CD8-positive, alpha-beta T cell (primary cell): ENCODE measurements at regions of chr6 and their contacts with region 1.

Region 1: GRCh38 chr6:6676910-6677441 is 88.5 kb downstream of the LY86 start:
- DNase-seq: peak; percentile 58 to 90 (median 75)
- ATAC-seq: peak; percentile 98
- H3K4me3 ChIP-seq: no peak overlapping the region
- H3K4me3 Mint-ChIP-seq: no peak overlapping the region
- H3K27ac ChIP-seq: no peak overlapping the region
- H3K27ac Mint-ChIP-seq: no peak overlapping the region
- H3K4me1 ChIP-seq: peaks cover 7% of the 10 kb centered on the region
- H3K4me1 Mint-ChIP-seq: peaks cover 9% of the 10 kb centered on the region
- H3K27me3 ChIP-seq: no peaks in the 10 kb centered on the region
- H3K27me3 Mint-ChIP-seq: peaks cover 2% of the 10 kb centered on the region
- CTCF ChIP-seq: peak; percentile 97

Region 2: DNA sequence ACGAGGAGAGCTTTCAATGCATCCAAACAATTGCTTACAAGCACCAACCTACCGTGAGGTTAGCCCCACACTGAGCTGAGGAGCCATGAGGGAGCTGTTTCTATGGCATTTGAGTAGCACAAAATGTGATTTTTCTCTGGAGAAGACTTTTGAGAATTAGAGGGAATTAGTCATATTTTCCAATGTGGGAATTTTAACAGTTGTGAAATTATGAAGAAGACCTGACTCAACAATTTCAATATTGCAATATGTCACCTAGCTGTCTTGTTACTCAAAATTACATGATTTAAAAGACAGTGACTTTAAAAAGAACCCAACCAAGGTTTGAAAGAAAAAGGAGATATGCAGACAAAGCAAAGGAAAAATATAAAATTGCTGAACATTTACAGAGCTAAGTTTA is 151.0 kb before region 1 on chr6:
- CTCF ChIA-PET with region 1: no interaction called
- POLR2A ChIA-PET with region 1: no interaction called
- intact Hi-C with region 1: no loop called
- DNase-seq: no peak
- ATAC-seq: no peak
- H3K4me3 ChIP-seq: no peak overlapping the region
- H3K4me3 Mint-ChIP-seq: no peak overlapping the region
- H3K27ac ChIP-seq: no peak overlapping the region
- H3K27ac Mint-ChIP-seq: no peak overlapping the region
- H3K4me1 ChIP-seq: no peaks in the 10 kb centered on the region
- H3K4me1 Mint-ChIP-seq: peaks cover 3% of the 10 kb centered on the region
- H3K27me3 ChIP-seq: no peaks in the 10 kb centered on the region
- H3K27me3 Mint-ChIP-seq: peaks cover 11% of the 10 kb centered on the region
- CTCF ChIP-seq: no peak

Region 3: DNA sequence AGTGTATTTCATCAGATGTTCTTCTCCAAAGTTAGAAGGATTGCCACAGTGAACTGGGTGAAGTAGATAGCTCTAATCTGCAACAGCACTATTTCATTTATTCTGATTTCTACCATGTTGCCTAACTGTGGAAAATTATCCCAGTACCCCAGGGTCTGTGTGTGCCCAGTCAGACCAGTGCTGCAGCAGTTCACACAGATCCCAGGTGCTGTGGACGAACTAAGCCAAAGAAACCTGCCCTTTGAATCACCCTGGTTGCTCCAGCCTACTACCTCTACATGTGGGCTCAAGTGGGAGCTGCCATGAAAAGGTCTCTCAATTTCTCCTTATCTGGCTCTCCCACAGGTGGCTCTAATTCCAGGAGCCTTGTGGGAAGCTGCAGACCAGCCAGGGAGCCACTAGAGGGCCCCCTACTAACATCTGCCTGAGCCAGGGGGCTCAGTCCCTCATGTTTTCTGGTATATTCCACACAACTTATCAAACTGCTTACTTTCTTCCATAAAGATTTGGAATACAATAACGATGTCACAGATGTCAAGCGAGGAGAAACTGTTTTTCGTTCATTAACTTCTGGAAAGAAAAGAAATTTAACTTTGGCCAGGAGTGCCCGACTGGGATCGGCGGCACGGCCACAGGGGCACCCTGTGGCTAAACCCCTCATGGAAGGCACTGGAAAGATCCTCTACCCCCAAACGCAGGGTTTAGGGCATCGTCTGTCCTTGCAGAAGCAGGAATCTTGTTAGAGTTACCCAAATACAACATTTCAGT is 120.1 kb before region 1 on chr6:
- CTCF ChIA-PET with region 1: interaction called, 9 read pairs
- POLR2A ChIA-PET with region 1: no interaction called
- intact Hi-C with region 1: loop called (anchors 1 to 2 kb)
- DNase-seq: peak in 7 of 9 experiments; percentile 21 to 72 (median 51)
- ATAC-seq: peak; percentile 62
- H3K4me3 ChIP-seq: no peak overlapping the region
- H3K4me3 Mint-ChIP-seq: no peak overlapping the region
- H3K27ac ChIP-seq: no peak overlapping the region
- H3K27ac Mint-ChIP-seq: no peak overlapping the region
- H3K4me1 ChIP-seq: no peaks in the 10 kb centered on the region
- H3K4me1 Mint-ChIP-seq: peaks cover 1% of the 10 kb centered on the region
- H3K27me3 ChIP-seq: no peaks in the 10 kb centered on the region
- H3K27me3 Mint-ChIP-seq: no peaks in the 10 kb centered on the region
- CTCF ChIP-seq: peak; percentile 89

Region 4: DNA sequence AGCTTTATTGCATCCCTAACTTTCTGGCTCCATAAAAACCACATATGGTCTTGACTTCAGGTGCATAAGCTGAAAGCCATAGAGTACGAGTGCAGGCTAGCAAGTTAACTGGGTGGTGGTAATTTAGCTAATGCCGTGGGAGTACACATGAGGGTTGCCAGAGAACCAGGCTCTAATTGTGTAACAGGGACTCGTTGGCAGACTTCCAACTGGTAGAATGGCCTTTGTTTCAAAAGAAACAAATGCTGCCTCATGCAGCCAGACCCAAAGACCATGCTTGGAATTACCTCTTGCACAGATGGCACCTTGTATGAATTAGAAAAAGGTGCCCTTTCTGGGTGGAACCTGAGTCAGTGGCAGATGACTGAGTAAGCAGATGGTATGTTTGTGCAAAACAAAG is 15.3 kb before region 1 on chr6:
- CTCF ChIA-PET with region 1: interaction called, 33 read pairs
- POLR2A ChIA-PET with region 1: no interaction called
- intact Hi-C with region 1: no loop called
- DNase-seq: no peak
- ATAC-seq: no peak
- H3K4me3 ChIP-seq: no peak overlapping the region
- H3K4me3 Mint-ChIP-seq: no peak overlapping the region
- H3K27ac ChIP-seq: no peak overlapping the region
- H3K27ac Mint-ChIP-seq: no peak overlapping the region
- H3K4me1 ChIP-seq: peaks cover 34% of the 10 kb centered on the region
- H3K4me1 Mint-ChIP-seq: peaks cover 56% of the 10 kb centered on the region
- H3K27me3 ChIP-seq: no peaks in the 10 kb centered on the region
- H3K27me3 Mint-ChIP-seq: no peaks in the 10 kb centered on the region
- CTCF ChIP-seq: no peak

Region 5: DNA sequence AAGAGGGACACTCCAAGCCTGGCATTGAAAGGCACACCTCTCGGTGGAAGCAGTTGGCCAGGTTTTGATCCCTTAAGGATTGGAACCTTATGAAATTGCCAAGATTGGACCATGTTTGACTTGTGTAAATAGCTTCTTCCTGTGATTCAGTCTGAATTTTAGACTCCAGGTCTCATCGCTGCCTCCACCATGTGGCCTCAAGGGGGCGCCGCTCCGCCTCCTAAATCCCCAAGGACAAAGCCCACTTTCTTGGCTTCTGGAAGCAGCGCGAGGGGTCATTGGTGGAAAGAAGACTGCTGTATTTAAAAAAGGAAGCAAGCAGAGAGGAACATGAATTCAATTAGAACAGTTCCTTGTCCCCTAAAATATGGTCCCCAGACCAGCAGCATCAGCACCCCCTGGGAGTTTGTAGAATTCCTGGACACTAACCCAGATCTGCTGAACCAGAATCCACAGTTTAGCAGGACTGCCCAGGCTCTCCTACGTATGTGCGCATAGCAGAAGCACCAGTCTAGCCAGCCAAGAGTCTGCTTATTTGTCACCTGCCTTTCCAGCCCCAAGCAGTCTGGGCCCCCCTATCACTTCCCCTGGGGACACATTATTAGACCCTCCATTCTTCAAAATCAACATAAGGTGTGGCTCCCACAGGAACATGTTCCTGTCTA is 20.0 kb after region 1 on chr6:
- CTCF ChIA-PET with region 1: interaction called, 14 read pairs
- POLR2A ChIA-PET with region 1: no interaction called
- intact Hi-C with region 1: no loop called
- DNase-seq: peak in 3 of 9 experiments; percentile 20 to 48 (median 23)
- ATAC-seq: no peak
- H3K4me3 ChIP-seq: no peak overlapping the region
- H3K4me3 Mint-ChIP-seq: no peak overlapping the region
- H3K27ac ChIP-seq: no peak overlapping the region
- H3K27ac Mint-ChIP-seq: no peak overlapping the region
- H3K4me1 ChIP-seq: no peaks in the 10 kb centered on the region
- H3K4me1 Mint-ChIP-seq: peaks cover 2% of the 10 kb centered on the region
- H3K27me3 ChIP-seq: no peaks in the 10 kb centered on the region
- H3K27me3 Mint-ChIP-seq: peaks cover 6% of the 10 kb centered on the region
- CTCF ChIP-seq: no peak

Region 6: DNA sequence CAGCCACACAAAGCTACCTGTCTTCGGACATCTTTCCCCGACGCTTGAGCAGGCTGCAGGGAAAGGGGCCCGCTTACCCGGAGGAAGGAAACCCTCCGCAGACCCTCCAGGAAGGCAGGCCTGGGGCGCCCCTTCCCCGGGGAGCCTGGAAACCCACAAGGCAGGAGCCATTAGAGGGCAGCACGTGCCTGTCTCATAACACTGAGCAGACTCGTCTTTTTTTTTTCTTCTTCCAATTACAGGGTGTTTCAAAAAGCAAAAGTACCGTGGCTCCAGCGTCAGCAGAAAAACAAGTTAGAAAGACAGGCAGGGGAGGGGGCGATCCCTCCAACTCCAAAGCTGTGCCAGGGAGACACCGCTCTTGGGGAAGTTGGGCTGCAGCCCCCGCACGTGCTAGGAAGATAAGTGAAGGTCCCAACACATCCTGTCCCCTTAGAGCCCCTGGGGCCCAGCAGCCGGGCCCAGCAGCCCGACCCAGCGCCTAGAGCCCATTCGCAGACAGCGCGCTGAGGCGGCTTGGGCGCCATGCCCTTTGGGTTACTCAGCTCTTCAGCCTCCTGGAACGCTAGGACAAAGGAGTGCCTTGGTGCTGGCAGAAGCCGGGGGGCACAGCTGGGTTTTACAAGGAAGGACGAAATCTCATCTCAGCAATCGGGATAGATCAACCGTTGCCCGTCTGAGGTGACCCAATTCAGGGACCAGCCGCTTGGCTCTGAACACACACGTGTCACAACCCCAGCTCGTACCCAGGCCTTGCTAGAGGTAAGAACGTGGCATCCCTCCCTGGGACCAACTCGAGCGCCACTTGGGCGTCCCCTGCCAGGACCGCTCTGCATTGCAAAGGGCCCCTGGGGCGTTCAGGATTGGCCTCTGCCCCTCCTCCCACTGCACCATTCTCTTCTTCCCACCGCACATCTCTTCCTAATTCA is 47.8 kb after region 1 on chr6:
- CTCF ChIA-PET with region 1: interaction called, 6 read pairs
- POLR2A ChIA-PET with region 1: no interaction called
- intact Hi-C with region 1: loop called in 1 of 2 experiments (anchors 1 kb)
- DNase-seq: peak; percentile 14 to 73 (median 52)
- ATAC-seq: peak; percentile 77
- H3K4me3 ChIP-seq: peak overlapping the region; percentile 29 to 38
- H3K4me3 Mint-ChIP-seq: peak overlapping the region; percentile 74
- H3K27ac ChIP-seq: no peak overlapping the region
- H3K27ac Mint-ChIP-seq: no peak overlapping the region
- H3K4me1 ChIP-seq: peaks cover 11% of the 10 kb centered on the region
- H3K4me1 Mint-ChIP-seq: peaks cover 6% of the 10 kb centered on the region
- H3K27me3 ChIP-seq: no peaks in the 10 kb centered on the region
- H3K27me3 Mint-ChIP-seq: peaks cover 8% of the 10 kb centered on the region
- CTCF ChIP-seq: peak; percentile 63

Region 7: DNA sequence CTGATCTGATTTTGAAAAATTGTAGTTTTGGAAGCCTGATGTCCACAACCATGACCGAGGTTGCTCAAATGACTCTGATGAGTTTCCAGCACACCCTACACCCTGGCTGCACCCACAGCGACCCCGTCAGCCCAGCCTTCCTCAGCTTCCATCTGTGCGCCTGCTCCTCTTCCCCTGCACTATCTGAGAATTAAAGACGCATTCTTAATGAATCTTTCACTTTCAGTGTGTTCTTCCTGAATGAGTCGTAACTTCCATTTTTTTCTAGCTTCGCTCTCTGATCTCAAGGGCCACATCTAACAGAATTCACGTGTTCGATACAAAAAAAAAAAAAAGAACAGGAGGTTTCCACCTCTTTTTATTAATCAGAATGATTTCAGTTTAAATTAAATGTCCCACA is 409.5 kb after region 1 on chr6:
- CTCF ChIA-PET with region 1: interaction called, 3 read pairs
- POLR2A ChIA-PET with region 1: no interaction called
- intact Hi-C with region 1: loop called in 1 of 2 experiments (anchors 5 kb)
- DNase-seq: peak in 7 of 9 experiments; percentile 11 to 77 (median 47)
- ATAC-seq: peak; percentile 68
- H3K4me3 ChIP-seq: peak overlapping the region; percentile 34 to 41
- H3K4me3 Mint-ChIP-seq: peak overlapping the region; percentile 83
- H3K27ac ChIP-seq: peak overlapping the region in 1 of 2 experiments; percentile 48
- H3K27ac Mint-ChIP-seq: peak overlapping the region; percentile 89
- H3K4me1 ChIP-seq: peaks cover 28% of the 10 kb centered on the region
- H3K4me1 Mint-ChIP-seq: peaks cover 35% of the 10 kb centered on the region
- H3K27me3 ChIP-seq: no peaks in the 10 kb centered on the region
- H3K27me3 Mint-ChIP-seq: no peaks in the 10 kb centered on the region
- CTCF ChIP-seq: no peak

Region 8: GRCh38 chr6:7615611-7616383 is 938.8 kb after region 1 on chr6:
- CTCF ChIA-PET with region 1: interaction called, 5 read pairs
- POLR2A ChIA-PET with region 1: no interaction called
- intact Hi-C with region 1: loop called (anchors 2 to 5 kb)
- DNase-seq: peak in 5 of 9 experiments; percentile 25 to 65 (median 32)
- ATAC-seq: peak; percentile 52
- H3K4me3 ChIP-seq: no peak overlapping the region
- H3K4me3 Mint-ChIP-seq: peak overlapping the region; percentile 8
- H3K27ac ChIP-seq: no peak overlapping the region
- H3K27ac Mint-ChIP-seq: peak overlapping the region; percentile 0
- H3K4me1 ChIP-seq: peaks cover 7% of the 10 kb centered on the region
- H3K4me1 Mint-ChIP-seq: peaks cover 11% of the 10 kb centered on the region
- H3K27me3 ChIP-seq: no peaks in the 10 kb centered on the region
- H3K27me3 Mint-ChIP-seq: peaks cover 2% of the 10 kb centered on the region
- CTCF ChIP-seq: peak; percentile 85